ENCODE measurements at regions of chr6 and their contacts with region 1.

Region 1: DNA sequence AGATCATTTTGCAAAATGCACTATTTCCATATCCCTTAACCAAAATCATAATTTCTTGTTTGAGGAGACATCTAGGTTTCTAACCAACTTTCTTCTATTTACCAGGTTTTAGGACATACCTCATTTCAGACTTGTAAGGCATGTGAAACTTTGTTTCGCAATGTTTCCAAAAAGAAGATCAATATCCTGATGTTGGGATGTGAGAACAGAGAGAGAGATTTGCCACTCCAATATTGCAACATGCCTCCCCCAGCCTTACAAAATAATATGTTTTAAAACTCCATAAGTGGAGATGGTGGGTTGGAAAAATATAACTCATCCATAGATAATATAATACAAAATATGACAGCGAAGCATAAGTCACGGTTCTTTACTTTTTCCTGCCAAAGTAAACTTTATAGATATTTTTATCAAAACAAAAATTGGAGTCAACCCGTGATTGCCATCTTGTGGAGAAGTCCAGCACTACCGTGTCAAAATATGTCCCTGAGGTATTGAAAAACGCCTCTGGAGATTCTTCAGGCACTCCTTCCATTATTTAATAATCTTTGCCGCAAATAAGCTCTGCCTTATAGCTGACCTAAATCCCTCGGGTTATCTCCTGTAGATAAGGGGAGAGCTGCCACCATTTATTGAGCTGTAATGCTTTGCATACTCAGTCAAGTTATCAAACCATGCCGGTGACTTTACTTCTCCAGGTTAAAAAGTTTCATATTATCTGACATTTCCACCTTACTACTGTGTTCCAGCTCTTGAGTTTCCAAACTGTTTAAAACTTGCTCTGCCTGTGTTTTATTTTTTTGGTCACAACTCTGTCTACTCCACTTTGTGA is 534.2 kb downstream of the HACE1 start:
- DNase-seq: peak; percentile 4
- H3K4me3 ChIP-seq: no peak overlapping the region
- H3K27ac ChIP-seq: no peak overlapping the region
- H3K4me1 ChIP-seq: peaks cover 9% of the 10 kb centered on the region
- H3K27me3 ChIP-seq: peaks cover 2% of the 10 kb centered on the region
- CTCF ChIP-seq: peak; percentile 56 to 72

Region 2: DNA sequence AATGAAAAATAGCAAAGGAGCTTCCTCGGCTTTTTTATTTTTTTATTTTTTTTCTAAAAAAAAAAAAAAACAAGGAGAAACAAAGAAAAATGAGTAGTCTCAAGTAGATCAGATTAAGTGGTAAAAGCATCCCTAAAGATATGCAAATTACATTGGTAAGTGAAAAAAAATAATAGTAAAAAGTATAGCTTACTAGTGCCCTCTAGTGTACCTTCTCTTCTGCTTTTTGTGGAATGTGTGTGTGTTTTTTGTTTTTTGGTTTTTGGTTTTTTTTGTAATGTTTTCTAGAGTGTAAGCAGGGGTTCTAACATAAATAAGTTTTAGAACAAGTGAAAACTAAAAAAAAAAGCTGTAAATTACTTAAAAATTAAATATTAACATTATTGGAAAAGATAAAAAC is 527.8 kb before region 1 on chr6:
- CTCF ChIA-PET with region 1: no interaction called
- dilution Hi-C with region 1: no loop called
- in situ Hi-C with region 1: no loop called
- intact Hi-C with region 1: loop called (anchors 10 kb)
- DNase-seq: no peak
- H3K4me3 ChIP-seq: no peak overlapping the region
- H3K27ac ChIP-seq: no peak overlapping the region
- H3K4me1 ChIP-seq: no peaks in the 10 kb centered on the region
- H3K27me3 ChIP-seq: no peaks in the 10 kb centered on the region
- CTCF ChIP-seq: peak; percentile 31 to 49

Region 3: GRCh38 chr6:104003803-104004516 is 321.6 kb before region 1 on chr6:
- CTCF ChIA-PET with region 1: no interaction called
- dilution Hi-C with region 1: no loop called
- in situ Hi-C with region 1: no loop called
- intact Hi-C with region 1: loop called (anchors 2 kb)
- DNase-seq: no peak
- H3K4me3 ChIP-seq: no peak overlapping the region
- H3K27ac ChIP-seq: no peak overlapping the region
- H3K4me1 ChIP-seq: no peaks in the 10 kb centered on the region
- H3K27me3 ChIP-seq: no peaks in the 10 kb centered on the region
- CTCF ChIP-seq: peak in 1 of 2 donors; percentile 36

Region 4: GRCh38 chr6:104227508-104227907 is 98.0 kb before region 1 on chr6:
- CTCF ChIA-PET with region 1: no interaction called
- dilution Hi-C with region 1: no loop called
- in situ Hi-C with region 1: no loop called
- intact Hi-C with region 1: loop called (anchors 1 kb)
- DNase-seq: no peak
- H3K4me3 ChIP-seq: no peak overlapping the region
- H3K27ac ChIP-seq: no peak overlapping the region
- H3K4me1 ChIP-seq: no peaks in the 10 kb centered on the region
- H3K27me3 ChIP-seq: no peaks in the 10 kb centered on the region
- CTCF ChIP-seq: no peak

Region 5: DNA sequence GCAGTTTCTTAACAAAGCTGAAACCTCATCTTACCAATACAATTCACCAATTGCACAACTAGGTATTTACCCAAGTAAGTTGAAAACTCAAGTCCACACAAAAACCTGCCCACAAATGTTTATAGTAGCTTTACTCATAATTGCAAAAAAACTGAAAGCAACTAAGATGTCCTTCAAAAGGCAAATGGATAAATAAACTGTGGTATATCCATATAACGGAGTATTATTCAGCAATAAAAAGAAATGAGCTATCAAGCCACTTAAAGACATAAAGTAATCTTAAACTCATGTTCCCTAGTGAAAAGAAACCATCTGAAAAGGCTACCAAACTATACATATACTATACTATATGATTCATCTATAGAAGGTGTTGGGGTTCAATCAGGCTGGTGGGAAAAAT is 354.4 kb after region 1 on chr6:
- CTCF ChIA-PET with region 1: no interaction called
- dilution Hi-C with region 1: no loop called
- in situ Hi-C with region 1: no loop called
- intact Hi-C with region 1: no loop called
- DNase-seq: no peak
- H3K4me3 ChIP-seq: no peak overlapping the region
- H3K27ac ChIP-seq: no peak overlapping the region
- H3K4me1 ChIP-seq: no peaks in the 10 kb centered on the region
- H3K27me3 ChIP-seq: no peaks in the 10 kb centered on the region
- CTCF ChIP-seq: no peak

Region 6: GRCh38 chr6:104771258-104771832 is 445.8 kb after region 1 on chr6:
- CTCF ChIA-PET with region 1: no interaction called
- dilution Hi-C with region 1: no loop called
- in situ Hi-C with region 1: no loop called
- intact Hi-C with region 1: loop called (anchors 5 kb)
- DNase-seq: no peak
- H3K4me3 ChIP-seq: no peak overlapping the region
- H3K27ac ChIP-seq: no peak overlapping the region
- H3K4me1 ChIP-seq: no peaks in the 10 kb centered on the region
- H3K27me3 ChIP-seq: no peaks in the 10 kb centered on the region
- CTCF ChIP-seq: peak; percentile 42 to 52

Measured in mammary epithelial cell (primary cell).